Caco-2 (cell line): ENCODE measurements at regions of chr5 and their contacts with region 1.

Region 1: GRCh38 chr5:169980418-169981053 is at the start of gene INSYN2B:
- DNase-seq: peak; percentile 70 to 76
- H3K4me3 ChIP-seq: no peak within 1 kb of the TSS
- H3K4me3 Mint-ChIP-seq: peak within 1 kb of the TSS; percentile 7
- H3K27ac Mint-ChIP-seq: no peak within 1 kb of the TSS
- H3K4me1 ChIP-seq: 0 out of 2 replicates have a peak, but pooled peaks cover 4% of the 10 kb centered on the region
- H3K4me1 Mint-ChIP-seq: no peaks in the 10 kb centered on the region
- H3K27me3 ChIP-seq: no peaks in the 10 kb centered on the region
- H3K27me3 Mint-ChIP-seq: peaks cover 14% of the 10 kb centered on the region
- CTCF ChIP-seq: peak; percentile 64 to 66
- total RNA-seq, gene INSYN2B: 0.09 TPM in 1 of 2 replicates, not detected in the other

Region 2: GRCh38 chr5:169838688-169839087 is 141.8 kb before region 1 on chr5:
- CTCF ChIA-PET with region 1: no interaction called
- POLR2A ChIA-PET with region 1: no interaction called
- intact Hi-C with region 1: loop called (anchors 10 kb)
- DNase-seq: no peak
- H3K4me3 ChIP-seq: no peak overlapping the region
- H3K4me3 Mint-ChIP-seq: no peak overlapping the region
- H3K27ac Mint-ChIP-seq: no peak overlapping the region
- H3K4me1 ChIP-seq: no peaks in the 10 kb centered on the region
- H3K4me1 Mint-ChIP-seq: no peaks in the 10 kb centered on the region
- H3K27me3 ChIP-seq: no peaks in the 10 kb centered on the region
- H3K27me3 Mint-ChIP-seq: peaks cover 11% of the 10 kb centered on the region
- CTCF ChIP-seq: no peak

Region 3: DNA sequence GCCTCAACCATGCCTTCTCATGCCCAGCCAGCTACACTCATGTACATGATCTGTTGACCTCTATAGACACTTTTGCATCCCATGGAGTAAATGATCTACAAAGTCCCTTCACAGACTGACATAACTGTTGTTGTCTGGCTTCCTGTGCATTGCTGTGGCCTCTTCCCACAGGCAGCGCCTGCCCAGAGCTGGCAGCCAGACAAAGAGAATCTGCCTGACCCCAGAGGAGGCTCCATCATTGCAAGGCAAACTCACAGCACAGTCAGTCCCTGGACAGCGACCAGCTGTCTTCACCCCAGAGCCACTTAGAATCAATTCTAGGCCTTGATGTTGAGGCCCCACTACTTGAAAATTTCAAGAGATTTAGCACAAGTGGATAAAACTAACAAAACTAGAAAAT is 65.8 kb before region 1 on chr5:
- CTCF ChIA-PET with region 1: interaction called, 4 read pairs
- POLR2A ChIA-PET with region 1: no interaction called
- intact Hi-C with region 1: loop called (anchors 2 kb)
- DNase-seq: no peak
- H3K4me3 ChIP-seq: no peak overlapping the region
- H3K4me3 Mint-ChIP-seq: no peak overlapping the region
- H3K27ac Mint-ChIP-seq: no peak overlapping the region
- H3K4me1 ChIP-seq: no peaks in the 10 kb centered on the region; the same call in 1 of the 2 replicates
- H3K4me1 Mint-ChIP-seq: no peaks in the 10 kb centered on the region
- H3K27me3 ChIP-seq: no peaks in the 10 kb centered on the region
- H3K27me3 Mint-ChIP-seq: peaks cover 6% of the 10 kb centered on the region
- CTCF ChIP-seq: no peak